Endothelial cell of umbilical vein (primary cell): ENCODE measurements at regions of chr11 and their contacts with region 1.

Region 1: GRCh38 chr11:19071255-19071654 is 10.7 kb upstream of the MRGPRX2 start:
- DNase-seq: peak; percentile 84
- H3K4me3 ChIP-seq: no peak overlapping the region
- H3K27ac ChIP-seq: no peak overlapping the region
- H3K4me1 ChIP-seq: no peaks in the 10 kb centered on the region
- H3K27me3 ChIP-seq: peaks cover 13 to 23% of the 10 kb centered on the region in 2 experiments
- CTCF ChIP-seq: peak; percentile 89 to 98
- POLR2A ChIP-seq: no peak

Region 2: GRCh38 chr11:18310800-18311340 is 760.4 kb before region 1 on chr11:
- CTCF ChIA-PET with region 1: no interaction called
- POLR2A ChIA-PET with region 1: no interaction called
- dilution Hi-C with region 1: no loop called
- intact Hi-C with region 1: no loop called
- DNase-seq: no peak
- H3K4me3 ChIP-seq: no peak overlapping the region
- H3K27ac ChIP-seq: no peak overlapping the region
- H3K4me1 ChIP-seq: no peaks in the 10 kb centered on the region
- H3K27me3 ChIP-seq: no peaks in the 10 kb centered on the region
- CTCF ChIP-seq: no peak
- POLR2A ChIP-seq: no peak

Region 3: DNA sequence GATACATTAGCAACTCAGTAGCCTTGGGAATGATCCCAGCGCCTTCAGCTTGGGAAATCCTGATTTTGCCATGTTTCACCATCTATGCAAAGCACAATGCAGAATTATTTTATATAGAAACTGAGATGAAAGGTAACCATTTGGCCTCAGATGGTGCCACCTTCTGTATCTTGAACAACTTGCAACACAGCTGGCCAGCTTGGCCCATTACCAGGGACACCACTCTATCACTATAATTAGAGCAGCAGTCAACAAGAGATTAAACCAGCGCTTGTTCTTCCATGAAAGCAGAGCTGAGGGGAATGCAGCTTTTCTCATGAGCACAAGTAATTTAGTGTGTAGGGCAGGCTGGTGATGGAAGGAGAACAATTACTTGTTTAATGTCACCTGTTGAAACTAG is 39.0 kb after region 1 on chr11:
- CTCF ChIA-PET with region 1: interaction called, 121 read pairs
- POLR2A ChIA-PET with region 1: no interaction called
- dilution Hi-C with region 1: no loop called
- intact Hi-C with region 1: no loop called
- DNase-seq: peak; percentile 24
- H3K4me3 ChIP-seq: no peak overlapping the region
- H3K27ac ChIP-seq: no peak overlapping the region
- H3K4me1 ChIP-seq: peaks cover 7% of the 10 kb centered on the region
- H3K27me3 ChIP-seq: no peaks in the 10 kb centered on the region
- CTCF ChIP-seq: no peak
- POLR2A ChIP-seq: no peak

Region 4: GRCh38 chr11:19168090-19168489 is 96.8 kb after region 1 on chr11:
- CTCF ChIA-PET with region 1: interaction called, 36 read pairs
- POLR2A ChIA-PET with region 1: no interaction called
- dilution Hi-C with region 1: no loop called
- intact Hi-C with region 1: no loop called
- DNase-seq: no peak
- H3K4me3 ChIP-seq: no peak overlapping the region
- H3K27ac ChIP-seq: no peak overlapping the region
- H3K4me1 ChIP-seq: peaks cover 9% of the 10 kb centered on the region
- H3K27me3 ChIP-seq: no peaks in the 10 kb centered on the region
- CTCF ChIP-seq: no peak
- POLR2A ChIP-seq: no peak

Region 5: DNA sequence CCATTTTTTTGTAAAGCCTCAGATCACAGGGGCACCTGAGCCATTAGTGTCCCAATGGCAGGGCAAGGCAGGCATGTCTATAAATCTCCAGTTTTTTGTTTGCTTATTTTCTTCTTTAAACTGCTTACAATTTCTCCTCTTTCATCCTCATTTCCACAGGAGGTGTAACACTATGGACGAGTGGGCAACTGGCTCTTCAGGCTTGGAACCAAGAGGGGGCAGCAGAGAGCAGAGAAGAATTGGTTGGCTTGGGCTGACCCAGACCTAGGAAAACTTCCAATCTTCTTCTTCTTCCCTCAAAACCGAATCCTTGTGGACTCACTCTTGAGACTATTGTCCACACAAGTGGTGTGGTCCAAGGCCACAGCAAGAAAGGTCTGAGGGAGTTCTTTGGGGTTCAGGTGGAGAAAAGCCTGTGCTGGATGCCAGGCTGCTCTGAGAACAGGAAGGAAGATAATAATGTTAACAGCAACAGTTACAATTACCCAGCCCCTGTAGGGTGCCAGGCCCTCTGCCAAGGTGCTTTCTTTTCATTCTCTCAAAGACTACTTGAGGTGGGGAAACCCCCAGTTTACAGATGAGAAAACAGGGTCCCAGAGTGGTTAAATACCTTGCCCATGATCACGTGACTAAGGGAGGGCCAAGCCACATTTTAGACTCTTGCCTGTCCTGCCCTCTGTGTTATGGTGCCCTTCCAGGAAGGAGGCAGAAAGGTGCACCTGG is 240.2 kb after region 1 on chr11:
- CTCF ChIA-PET with region 1: interaction called, 7 read pairs
- POLR2A ChIA-PET with region 1: no interaction called
- dilution Hi-C with region 1: no loop called
- intact Hi-C with region 1: loop called (anchors 1 kb)
- DNase-seq: peak; percentile 62
- H3K4me3 ChIP-seq: no peak overlapping the region
- H3K27ac ChIP-seq: no peak overlapping the region
- H3K4me1 ChIP-seq: no peaks in the 10 kb centered on the region
- H3K27me3 ChIP-seq: peaks cover 8 to 14% of the 10 kb centered on the region in 2 experiments
- CTCF ChIP-seq: peak; percentile 90 to 97
- POLR2A ChIP-seq: no peak

Region 6: GRCh38 chr11:19546325-19546724 is 475.1 kb after region 1 on chr11:
- CTCF ChIA-PET with region 1: interaction called, 72 read pairs
- POLR2A ChIA-PET with region 1: no interaction called
- dilution Hi-C with region 1: no loop called
- intact Hi-C with region 1: no loop called
- DNase-seq: no peak
- H3K4me3 ChIP-seq: no peak overlapping the region
- H3K27ac ChIP-seq: no peak overlapping the region
- H3K4me1 ChIP-seq: no peaks in the 10 kb centered on the region
- H3K27me3 ChIP-seq: no peaks in the 10 kb centered on the region
- CTCF ChIP-seq: no peak
- POLR2A ChIP-seq: no peak

Region 7: DNA sequence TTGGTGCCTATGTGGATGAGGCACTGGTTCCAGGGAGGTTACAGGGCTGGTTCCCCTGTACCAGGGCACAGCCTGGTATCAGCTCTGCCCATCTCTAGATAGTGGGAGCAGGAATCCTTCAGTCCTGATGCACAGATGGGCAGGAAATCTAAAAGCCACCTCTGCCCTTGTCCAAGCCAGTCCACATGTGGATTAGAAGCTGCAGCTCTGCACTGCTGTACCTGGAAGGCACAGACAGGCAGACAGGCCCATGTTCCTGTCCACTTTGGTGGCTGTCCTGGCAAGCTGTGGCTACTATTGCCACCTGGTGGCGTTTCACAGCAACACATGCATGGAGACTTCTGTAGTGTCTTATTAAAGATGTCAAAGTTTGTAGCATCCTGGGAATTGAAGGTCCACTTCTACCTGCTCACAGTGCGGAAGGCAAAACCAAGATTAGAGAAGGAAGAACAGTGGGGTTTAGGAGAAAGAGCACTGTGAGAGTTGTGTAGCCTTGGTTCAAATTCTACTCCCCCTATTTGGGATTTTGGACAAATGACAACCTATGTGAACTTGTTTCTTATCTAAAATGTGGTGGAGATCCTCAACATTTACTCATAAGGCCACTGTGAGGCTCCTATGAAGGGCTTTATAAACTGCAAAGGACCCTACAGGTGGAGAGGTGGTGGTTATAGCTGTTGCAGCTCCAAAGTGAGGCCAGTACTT is 671.5 kb after region 1 on chr11:
- CTCF ChIA-PET with region 1: interaction called, 4 read pairs
- POLR2A ChIA-PET with region 1: no interaction called
- dilution Hi-C with region 1: no loop called
- intact Hi-C with region 1: loop called (anchors 10 kb)
- DNase-seq: peak; percentile 82
- H3K4me3 ChIP-seq: no peak overlapping the region
- H3K27ac ChIP-seq: no peak overlapping the region
- H3K4me1 ChIP-seq: peaks cover 8% of the 10 kb centered on the region
- H3K27me3 ChIP-seq: no peaks in the 10 kb centered on the region
- CTCF ChIP-seq: peak; percentile 75 to 76
- POLR2A ChIP-seq: no peak